ENCODE measurements at regions of chr14 and their contacts with region 1.

Region 1: DNA sequence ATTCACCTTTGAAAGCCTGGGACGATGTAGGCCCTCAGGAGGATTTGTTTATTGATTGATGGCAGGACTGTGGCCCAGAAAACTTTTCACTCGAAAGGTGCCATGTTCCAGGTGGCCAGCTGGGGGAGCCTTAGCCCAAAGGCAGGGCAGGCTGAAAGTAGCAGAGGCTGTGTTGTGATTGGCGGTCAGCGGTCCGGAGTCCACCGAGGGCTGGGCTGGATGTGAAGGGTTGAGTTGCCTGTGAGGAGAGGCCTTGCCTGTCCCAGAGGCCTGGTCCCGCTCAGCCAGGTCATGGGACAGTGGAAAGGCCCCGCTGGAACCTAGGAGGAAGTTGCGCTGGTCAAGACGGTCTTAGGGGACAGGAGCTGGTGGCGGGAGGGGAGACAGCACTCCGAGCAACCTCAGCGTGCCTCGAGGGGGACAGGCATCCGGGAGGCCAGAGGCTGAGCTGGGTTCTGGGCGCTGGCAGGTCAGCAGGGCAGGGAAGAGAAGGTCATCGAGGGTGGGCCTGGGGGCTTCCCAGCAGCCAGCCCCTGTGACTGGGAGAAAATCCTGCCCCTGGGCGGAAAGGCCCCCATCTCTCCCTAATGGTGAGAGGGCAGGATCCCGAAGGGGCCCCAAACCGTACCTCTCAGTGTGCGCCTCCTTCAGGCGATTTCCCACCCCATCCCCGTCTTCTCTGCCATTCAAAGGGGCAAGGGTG is 26.3 kb downstream of the CMA1 start:
- DNase-seq: peak in 6 of 9 donors; percentile 24 to 51 (median 35)
- ATAC-seq: peak; percentile 71
- H3K4me3 ChIP-seq: peak overlapping the region; percentile 26
- H3K4me3 Mint-ChIP-seq: peak overlapping the region in 8 of 10 donors; percentile 39 to 81 (median 60)
- H3K27ac ChIP-seq: no peak overlapping the region
- H3K27ac Mint-ChIP-seq: peak overlapping the region in 7 of 9 donors; percentile 13 to 85 (median 70)
- H3K4me1 ChIP-seq: peaks cover 12 to 19% of the 10 kb centered on the region in 2 donors
- H3K4me1 Mint-ChIP-seq: peaks cover 0 to 28% (median 15%) of the 10 kb centered on the region in 7 donors
- H3K27me3 ChIP-seq: no peaks in the 10 kb centered on the region
- H3K27me3 Mint-ChIP-seq: peaks cover 0 to 3% (median 0%) of the 10 kb centered on the region in 5 donors

Region 2: DNA sequence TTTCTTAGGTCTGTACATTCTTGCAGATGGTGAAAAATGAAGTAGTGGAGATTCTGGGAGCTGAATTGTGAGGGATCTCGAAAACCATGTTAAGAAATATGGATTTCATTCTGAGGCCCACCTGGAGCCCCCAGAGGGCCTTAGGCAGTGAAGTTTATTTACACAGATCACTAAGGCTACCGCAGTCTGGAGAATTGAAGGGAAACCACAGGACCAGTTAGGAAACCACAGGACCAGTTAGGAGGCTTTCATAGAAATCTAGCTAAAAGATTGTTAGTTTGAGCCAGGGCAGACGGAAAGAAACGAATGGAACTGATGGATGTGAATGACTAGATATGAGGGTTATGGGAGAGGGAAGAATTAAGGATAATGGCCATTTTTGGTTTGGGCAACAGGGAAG is 59.5 kb before region 1 on chr14:
- CTCF ChIA-PET with region 1: no interaction called
- POLR2A ChIA-PET with region 1: no interaction called
- intact Hi-C with region 1: no loop called
- DNase-seq: no peak
- ATAC-seq: no peak
- H3K4me3 ChIP-seq: no peak overlapping the region
- H3K4me3 Mint-ChIP-seq: no peak overlapping the region
- H3K27ac ChIP-seq: no peak overlapping the region
- H3K27ac Mint-ChIP-seq: no peak overlapping the region
- H3K4me1 ChIP-seq: peaks cover 4 to 16% of the 10 kb centered on the region in 2 donors
- H3K4me1 Mint-ChIP-seq: peaks cover 3 to 22% (median 22%) of the 10 kb centered on the region in 7 donors
- H3K27me3 ChIP-seq: no peaks in the 10 kb centered on the region
- H3K27me3 Mint-ChIP-seq: peaks cover 0 to 7% (median 0%) of the 10 kb centered on the region in 5 donors

Region 3: GRCh38 chr14:24678801-24679247 is 197.1 kb after region 1 on chr14:
- CTCF ChIA-PET with region 1: interaction called, 4 read pairs
- POLR2A ChIA-PET with region 1: interaction called, 5 read pairs
- intact Hi-C with region 1: loop called (anchors 1 to 5 kb)
- DNase-seq: peak; percentile 45 to 85 (median 78)
- ATAC-seq: peak; percentile 96
- H3K4me3 ChIP-seq: peak overlapping the region; percentile 33
- H3K4me3 Mint-ChIP-seq: peak overlapping the region; percentile 71 to 93 (median 86)
- H3K27ac ChIP-seq: no peak overlapping the region
- H3K27ac Mint-ChIP-seq: peak overlapping the region; percentile 33 to 95 (median 70)
- H3K4me1 ChIP-seq: peaks cover 17 to 44% of the 10 kb centered on the region in 2 donors
- H3K4me1 Mint-ChIP-seq: peaks cover 35 to 65% (median 57%) of the 10 kb centered on the region in 7 donors
- H3K27me3 ChIP-seq: no peaks in the 10 kb centered on the region
- H3K27me3 Mint-ChIP-seq: peaks cover 0 to 4% (median 0%) of the 10 kb centered on the region in 5 donors

Region 4: DNA sequence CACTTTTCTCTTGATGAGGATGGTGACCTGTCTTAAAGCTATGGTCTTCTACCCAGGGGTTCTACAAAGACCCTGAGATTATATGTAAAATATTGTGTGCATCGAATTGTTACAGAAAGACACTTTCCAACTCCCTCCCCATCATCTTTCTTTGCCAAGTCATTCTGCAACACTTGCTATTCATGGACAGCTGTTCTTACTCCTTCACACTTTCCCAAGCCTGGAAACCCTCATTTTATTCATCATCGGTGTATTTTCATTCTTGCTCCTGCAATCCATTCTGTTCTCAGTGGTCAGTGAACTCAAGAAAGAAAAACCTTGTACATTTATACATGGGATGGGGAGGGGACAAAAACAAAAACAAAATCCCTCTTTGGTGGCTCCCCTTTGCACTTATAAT is 658.6 kb after region 1 on chr14:
- CTCF ChIA-PET with region 1: no interaction called
- POLR2A ChIA-PET with region 1: no interaction called
- intact Hi-C with region 1: no loop called
- DNase-seq: no peak
- ATAC-seq: no peak
- H3K4me3 ChIP-seq: no peak overlapping the region
- H3K4me3 Mint-ChIP-seq: no peak overlapping the region
- H3K27ac ChIP-seq: no peak overlapping the region
- H3K27ac Mint-ChIP-seq: no peak overlapping the region
- H3K4me1 ChIP-seq: no peaks in the 10 kb centered on the region
- H3K4me1 Mint-ChIP-seq: no peaks in the 10 kb centered on the region
- H3K27me3 ChIP-seq: no peaks in the 10 kb centered on the region
- H3K27me3 Mint-ChIP-seq: peaks cover under 1 to 19% (median 6%) of the 10 kb centered on the region in 5 donors

Region 5: DNA sequence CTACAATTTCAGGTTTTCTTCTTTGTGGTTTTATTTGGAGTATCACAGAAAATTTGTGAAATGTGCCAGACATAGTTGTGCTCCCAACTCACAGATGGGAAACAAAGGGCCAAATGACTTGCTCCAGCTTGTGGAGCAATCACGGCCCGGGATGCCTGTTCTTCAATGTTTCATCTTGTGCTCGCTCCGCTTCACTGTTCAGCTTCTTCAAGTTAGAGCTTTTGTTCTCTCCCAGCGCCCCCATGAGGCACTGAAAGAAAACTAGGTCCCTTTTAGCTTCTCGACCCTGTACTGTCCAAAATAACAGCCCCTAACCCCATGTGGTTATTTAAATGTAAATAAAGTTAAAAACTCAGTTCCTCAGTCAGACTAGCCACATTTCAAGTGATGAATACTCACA is 756.1 kb after region 1 on chr14:
- CTCF ChIA-PET with region 1: no interaction called
- POLR2A ChIA-PET with region 1: no interaction called
- intact Hi-C with region 1: no loop called
- DNase-seq: no peak
- ATAC-seq: no peak
- H3K4me3 ChIP-seq: no peak overlapping the region
- H3K4me3 Mint-ChIP-seq: no peak overlapping the region
- H3K27ac ChIP-seq: no peak overlapping the region
- H3K27ac Mint-ChIP-seq: no peak overlapping the region
- H3K4me1 ChIP-seq: no peaks in the 10 kb centered on the region
- H3K4me1 Mint-ChIP-seq: peaks cover 0 to 2% (median 0%) of the 10 kb centered on the region in 7 donors
- H3K27me3 ChIP-seq: no peaks in the 10 kb centered on the region
- H3K27me3 Mint-ChIP-seq: peaks cover 0 to 12% (median 8%) of the 10 kb centered on the region in 5 donors